ENCODE measurements at regions of chr6 and their contacts with region 1.

Region 1: DNA sequence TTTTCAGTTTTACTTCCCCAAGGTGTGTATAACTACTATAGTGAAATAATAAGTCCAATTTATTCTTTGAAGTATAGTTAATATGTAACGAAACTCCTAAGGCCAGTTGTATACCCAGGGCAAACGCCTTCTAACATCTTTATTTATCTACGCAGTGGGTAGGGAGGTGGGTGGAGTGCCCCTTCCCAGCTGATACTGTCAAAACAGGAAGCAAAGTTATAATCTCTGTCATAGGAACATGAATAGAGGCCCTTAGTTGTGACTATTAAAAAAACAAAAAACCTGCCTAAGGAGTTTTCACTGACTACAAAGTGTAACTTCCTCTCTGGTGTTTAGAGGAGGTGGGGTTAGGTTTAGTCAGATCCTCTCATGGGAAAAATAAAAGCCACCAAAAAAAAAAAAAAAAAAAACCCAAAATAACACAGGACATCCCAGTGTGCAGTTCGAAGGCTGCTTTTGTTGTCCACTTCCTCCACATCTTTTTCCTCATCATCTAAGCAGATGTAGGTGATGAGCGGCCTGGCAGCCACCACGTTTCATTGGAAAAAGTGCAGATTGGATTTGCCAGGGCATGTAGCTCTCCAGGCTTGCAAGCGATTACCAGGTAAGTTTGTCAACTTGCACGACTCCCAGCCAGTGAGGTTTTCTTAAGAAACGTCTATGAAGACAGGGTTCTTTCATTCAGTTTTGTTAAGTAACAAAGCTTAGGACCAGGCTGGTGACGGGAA is 58.7 kb downstream of the UTRN start:
- DNase-seq: peak; percentile 98
- ATAC-seq: peak; percentile 95
- H3K4me3 ChIP-seq: peak overlapping the region in 2 of 3 experiments; percentile 36 to 47; a peak in 4 of 6 replicates
- H3K27ac ChIP-seq: peak overlapping the region; percentile 56
- H3K4me1 ChIP-seq: peaks cover 99% of the 10 kb centered on the region
- H3K27me3 ChIP-seq: no peaks in the 10 kb centered on the region
- CTCF ChIP-seq: no peak
- EP300 ChIP-seq: peak in 1 of 2 experiments; percentile 99; a peak in 2 of 4 replicates
- POLR2A ChIP-seq: no peak; a peak in 1 of 4 replicates
- RAD21 ChIP-seq: no peak

Region 2: DNA sequence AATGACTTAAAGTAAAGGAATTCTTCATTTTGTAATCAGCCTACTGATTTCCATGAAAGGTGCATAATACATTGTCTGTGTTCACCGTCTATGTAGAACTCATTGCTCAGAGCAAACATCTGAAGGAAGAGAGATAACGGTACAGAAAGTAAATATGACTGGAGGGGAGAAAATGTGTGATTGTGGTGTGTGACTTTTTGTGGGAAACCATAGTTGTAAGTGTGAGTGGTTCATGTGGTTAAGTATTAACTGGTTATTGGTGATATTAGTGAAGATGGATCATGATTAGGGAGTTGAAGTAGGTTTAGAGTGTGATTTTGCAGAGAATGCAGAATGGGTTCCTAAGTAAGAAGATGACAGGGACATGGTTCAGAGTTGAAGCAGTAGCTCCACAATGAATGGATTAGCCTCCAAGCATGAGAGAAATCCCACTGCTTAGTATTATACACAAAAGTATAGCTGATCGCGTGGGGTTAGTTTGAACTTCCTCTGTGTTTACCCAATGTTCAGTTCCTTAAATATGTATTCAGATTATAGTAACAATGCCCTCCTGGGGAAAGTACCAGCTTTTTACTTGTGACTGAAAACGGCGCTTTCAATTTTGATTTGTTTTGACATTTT is 310.1 kb after region 1 on chr6:
- CTCF ChIA-PET with region 1: no interaction called
- POLR2A ChIA-PET with region 1: no interaction called
- in situ Hi-C with region 1: no loop called
- intact Hi-C with region 1: loop called (anchors 1 kb)
- DNase-seq: peak; percentile 91
- ATAC-seq: peak; percentile 78
- H3K4me3 ChIP-seq: peak overlapping the region in 2 of 3 experiments; percentile 1 to 36; a peak in 1 of 6 replicates
- H3K27ac ChIP-seq: peak overlapping the region; percentile 71
- H3K4me1 ChIP-seq: peaks cover 95% of the 10 kb centered on the region
- H3K27me3 ChIP-seq: no peaks in the 10 kb centered on the region
- CTCF ChIP-seq: no peak
- EP300 ChIP-seq: peak in 1 of 2 experiments; percentile 96; a peak in 2 of 4 replicates
- POLR2A ChIP-seq: no peak
- RAD21 ChIP-seq: 0 out of 2 replicates have a peak, but pooled peaks have one; percentile 13

Region 3: GRCh38 chr6:144683216-144684070 is 339.6 kb after region 1 on chr6:
- CTCF ChIA-PET with region 1: no interaction called
- POLR2A ChIA-PET with region 1: no interaction called
- in situ Hi-C with region 1: no loop called
- intact Hi-C with region 1: no loop called
- DNase-seq: no peak
- ATAC-seq: peak; percentile 35; the same call in 2 of the 3 replicates
- H3K4me3 ChIP-seq: no peak overlapping the region
- H3K27ac ChIP-seq: no peak overlapping the region
- H3K4me1 ChIP-seq: no peaks in the 10 kb centered on the region
- H3K27me3 ChIP-seq: no peaks in the 10 kb centered on the region
- CTCF ChIP-seq: no peak
- EP300 ChIP-seq: no peak
- POLR2A ChIP-seq: no peak
- RAD21 ChIP-seq: no peak